BJ (cell line): ENCODE measurements at regions of chr10 and their contacts with region 1.

Region 1: DNA sequence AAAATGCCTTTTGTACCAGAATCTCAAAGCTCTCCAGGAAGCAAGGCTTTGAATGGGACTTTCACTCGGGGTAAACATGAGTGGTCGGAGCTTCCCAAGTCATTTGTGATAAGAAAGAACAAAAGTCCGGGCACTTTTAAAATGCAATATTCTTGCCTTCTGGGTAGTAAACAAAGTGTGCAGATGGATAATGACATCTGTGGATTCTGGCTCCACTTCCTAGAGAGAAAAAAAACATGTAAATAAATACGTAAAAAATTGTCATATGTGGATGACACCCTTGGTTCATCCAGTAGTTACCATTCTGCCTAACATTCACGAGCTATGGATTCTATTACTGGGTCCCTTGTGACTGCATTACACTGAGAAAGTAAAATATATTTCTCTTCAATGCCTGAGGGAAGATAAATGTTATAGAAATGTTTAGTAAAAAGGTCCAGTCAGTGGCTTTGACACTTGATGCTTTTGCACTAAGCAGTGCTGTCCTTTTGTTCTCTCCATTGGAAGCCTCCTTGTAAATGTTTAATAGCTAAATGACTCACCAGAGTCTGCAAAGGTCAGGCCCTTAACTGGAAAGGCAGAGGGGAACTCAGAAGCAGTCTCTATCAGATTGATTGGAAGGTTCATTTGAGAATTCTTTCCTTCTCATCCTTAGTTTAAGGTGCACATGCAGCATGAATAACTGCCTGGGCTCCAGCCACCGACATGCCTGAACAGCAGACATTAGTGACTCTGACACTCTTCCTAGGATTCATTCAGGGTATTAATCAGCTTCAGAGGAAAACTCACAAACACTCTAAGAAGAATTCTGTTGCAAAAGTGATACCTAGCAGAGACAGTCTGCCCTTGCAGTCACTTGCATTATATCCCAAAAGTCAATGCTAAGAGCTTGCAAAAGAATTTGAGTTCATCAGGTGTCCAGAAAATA is 11.7 kb upstream of the EDRF1 start:
- DNase-seq: peak; percentile 50
- H3K4me3 ChIP-seq: no peak overlapping the region
- H3K27me3 ChIP-seq: no peaks in the 10 kb centered on the region
- CTCF ChIP-seq: no peak

Region 2: DNA sequence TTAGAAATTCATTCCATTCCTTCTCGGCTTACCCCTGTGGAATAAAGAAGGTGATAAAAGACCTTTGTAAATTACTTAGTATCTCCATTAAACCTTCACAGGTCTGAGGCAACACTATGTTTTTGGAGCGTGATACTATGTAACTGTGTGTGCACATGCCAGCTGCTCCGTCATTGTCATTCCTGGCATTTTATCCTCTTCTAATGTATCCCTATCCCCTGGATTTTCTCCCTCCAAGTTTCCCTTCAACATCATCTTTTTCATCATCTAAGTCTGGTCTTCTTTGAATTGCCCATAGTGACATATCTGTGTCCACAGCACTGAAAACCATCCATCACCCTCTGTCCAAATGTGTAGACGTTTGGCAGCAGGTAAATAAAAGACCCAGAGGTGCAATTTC is 150.5 kb before region 1 on chr10:
- CTCF ChIA-PET with region 1: no interaction called
- POLR2A ChIA-PET with region 1: no interaction called
- DNase-seq: no peak
- H3K4me3 ChIP-seq: no peak overlapping the region
- H3K27me3 ChIP-seq: no peaks in the 10 kb centered on the region; the same call in 1 of the 2 replicates
- CTCF ChIP-seq: no peak

Region 3: DNA sequence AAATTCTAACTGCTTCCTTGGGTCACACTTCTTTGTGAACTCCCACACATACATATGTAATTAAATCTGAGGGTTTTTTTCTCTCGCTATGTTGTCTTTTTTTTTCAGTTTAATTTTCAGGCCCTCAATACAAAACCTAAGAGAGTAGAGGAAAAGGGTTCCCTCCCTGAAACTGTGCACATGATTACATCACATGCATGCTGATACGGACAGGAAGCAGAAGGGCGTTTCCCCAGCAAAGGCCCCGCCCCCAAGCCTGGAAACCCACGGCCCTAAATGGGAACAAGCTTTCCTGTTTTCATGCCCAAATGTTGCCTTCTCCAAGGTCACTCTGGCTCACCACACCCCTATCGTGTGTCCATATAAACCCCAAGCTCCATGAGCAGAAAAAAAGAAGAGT is 140.3 kb before region 1 on chr10:
- CTCF ChIA-PET with region 1: no interaction called
- POLR2A ChIA-PET with region 1: interaction called, 13 read pairs
- DNase-seq: no peak
- H3K4me3 ChIP-seq: no peak overlapping the region
- H3K27me3 ChIP-seq: no peaks in the 10 kb centered on the region
- CTCF ChIP-seq: no peak

Region 4: DNA sequence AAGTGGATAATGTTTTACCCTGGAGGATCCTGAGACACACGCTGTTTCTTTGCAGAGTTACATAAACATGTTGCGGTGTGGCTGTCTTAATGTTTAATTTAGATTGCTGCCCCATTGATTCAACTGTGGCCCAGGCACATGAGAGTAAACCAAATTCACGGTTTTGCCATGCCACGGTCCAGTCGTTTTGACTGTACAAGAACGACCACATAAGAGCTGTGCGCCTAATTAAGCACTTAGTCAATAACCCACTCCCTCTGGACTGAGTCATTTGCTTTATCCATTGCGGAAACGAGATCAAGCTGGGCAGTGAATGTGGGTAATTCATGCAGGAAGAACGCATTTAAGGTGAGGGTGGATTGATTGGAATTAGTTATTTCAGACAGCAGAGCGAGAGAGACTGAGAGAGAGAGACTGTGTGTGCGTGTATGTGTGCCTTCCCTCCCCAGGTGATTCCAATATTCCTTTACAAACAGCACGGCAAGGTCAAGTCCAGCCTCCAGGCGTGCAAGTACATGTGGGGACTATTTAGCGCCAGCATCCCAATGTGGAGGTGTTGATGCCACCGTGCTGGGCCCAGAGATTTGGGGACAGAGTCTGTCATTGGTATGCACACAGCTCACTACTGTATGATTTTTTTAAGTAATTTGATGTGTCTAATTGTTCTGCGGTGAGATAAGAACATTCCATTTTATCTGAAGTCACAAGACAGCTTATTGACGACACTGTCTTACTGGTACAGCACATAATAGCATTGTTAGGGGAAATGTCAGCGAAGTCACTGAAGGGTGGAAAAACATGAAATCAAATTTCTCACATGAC is 16.4 kb before region 1 on chr10:
- CTCF ChIA-PET with region 1: no interaction called
- POLR2A ChIA-PET with region 1: no interaction called
- DNase-seq: peak; percentile 76
- H3K4me3 ChIP-seq: no peak overlapping the region
- H3K27me3 ChIP-seq: no peaks in the 10 kb centered on the region
- CTCF ChIP-seq: no peak